A673 (cell line): ENCODE measurements at regions of chr10 and their contacts with region 1.

Region 1: DNA sequence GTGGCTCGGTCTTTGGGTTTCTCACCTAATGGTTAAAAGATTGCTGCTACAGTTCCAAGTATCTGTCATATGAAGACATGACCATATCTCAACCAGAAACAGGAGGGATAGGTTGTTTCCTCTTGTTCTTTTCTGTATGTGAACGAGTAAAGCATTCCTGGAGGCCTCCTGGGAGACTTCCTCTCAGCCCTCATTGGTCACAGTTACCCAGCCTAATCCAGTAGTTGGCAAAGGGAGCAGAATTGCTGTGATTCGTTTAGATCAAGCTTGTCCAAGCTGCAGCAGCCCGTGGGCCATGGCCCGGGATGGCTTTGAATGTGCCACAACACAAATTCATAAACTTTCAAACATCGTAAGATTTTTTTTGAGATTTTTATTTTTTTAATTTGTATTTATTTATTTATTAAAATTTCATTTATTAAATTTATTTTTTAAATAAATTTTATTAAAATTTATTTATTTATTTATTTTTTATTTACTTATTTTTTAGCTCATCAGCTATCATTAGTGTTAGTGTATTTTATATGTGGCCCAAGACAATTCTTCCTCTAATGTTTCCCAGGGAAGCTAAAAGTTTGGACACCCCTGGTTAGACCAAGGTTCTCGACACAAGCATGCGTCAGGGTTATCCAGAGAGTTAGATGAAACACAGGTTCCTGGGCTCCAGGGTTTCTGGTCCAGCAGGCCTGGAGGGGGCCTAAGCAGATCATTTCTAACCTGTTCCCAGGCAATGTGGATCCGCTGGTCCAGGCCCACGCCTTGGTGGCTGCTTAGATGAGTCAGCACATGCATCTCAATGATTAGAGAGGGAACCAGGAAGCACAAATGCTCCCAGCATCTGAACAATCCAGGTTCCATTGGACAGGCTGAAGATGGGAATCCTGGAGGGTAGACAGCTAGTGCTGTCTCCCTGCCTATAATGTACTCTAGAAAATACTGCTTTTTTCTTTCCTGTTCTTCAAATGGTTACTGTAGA is 25.6 kb downstream of the CDC123 start:
- DNase-seq: peak; percentile 54
- H3K4me3 ChIP-seq: no peak overlapping the region
- H3K27ac ChIP-seq: peak overlapping the region; percentile 75
- H3K4me1 ChIP-seq: peaks cover 34% of the 10 kb centered on the region
- H3K27me3 ChIP-seq: no peaks in the 10 kb centered on the region
- CTCF ChIP-seq: no peak

Region 2: GRCh38 chr10:12540341-12540781 is 318.8 kb after region 1 on chr10:
- CTCF ChIA-PET with region 1: no interaction called
- POLR2A ChIA-PET with region 1: no interaction called
- intact Hi-C with region 1: loop called (anchors 5 kb)
- DNase-seq: peak; percentile 63
- H3K4me3 ChIP-seq: no peak overlapping the region
- H3K27ac ChIP-seq: peak overlapping the region; percentile 96
- H3K4me1 ChIP-seq: peaks cover 63% of the 10 kb centered on the region
- H3K27me3 ChIP-seq: no peaks in the 10 kb centered on the region
- CTCF ChIP-seq: no peak